Activated T-helper 2 cell treated with anti-CD3 and anti-CD28 coated beads, Interferon-gamma antibody, Interleukin-2, Interleukin-4, amounts not matched to agents 10 μg/mL and 5 μg/mL and 100 μg/mL, durations not matched to agents 14 hours and 24 hours and 36 hours (primary cell): ENCODE measurements at regions of chr10 and their contacts with region 1.

Region 1: GRCh38 chr10:110803830-110804338 is 67.8 kb upstream of the PDCD4 start:
- DNase-seq: no peak
- H3K4me3 Mint-ChIP-seq: no peak overlapping the region
- H3K27ac Mint-ChIP-seq: peak overlapping the region; percentile 39
- H3K4me1 Mint-ChIP-seq: peaks cover 34% of the 10 kb centered on the region
- H3K27me3 Mint-ChIP-seq: no peaks in the 10 kb centered on the region

Region 2: DNA sequence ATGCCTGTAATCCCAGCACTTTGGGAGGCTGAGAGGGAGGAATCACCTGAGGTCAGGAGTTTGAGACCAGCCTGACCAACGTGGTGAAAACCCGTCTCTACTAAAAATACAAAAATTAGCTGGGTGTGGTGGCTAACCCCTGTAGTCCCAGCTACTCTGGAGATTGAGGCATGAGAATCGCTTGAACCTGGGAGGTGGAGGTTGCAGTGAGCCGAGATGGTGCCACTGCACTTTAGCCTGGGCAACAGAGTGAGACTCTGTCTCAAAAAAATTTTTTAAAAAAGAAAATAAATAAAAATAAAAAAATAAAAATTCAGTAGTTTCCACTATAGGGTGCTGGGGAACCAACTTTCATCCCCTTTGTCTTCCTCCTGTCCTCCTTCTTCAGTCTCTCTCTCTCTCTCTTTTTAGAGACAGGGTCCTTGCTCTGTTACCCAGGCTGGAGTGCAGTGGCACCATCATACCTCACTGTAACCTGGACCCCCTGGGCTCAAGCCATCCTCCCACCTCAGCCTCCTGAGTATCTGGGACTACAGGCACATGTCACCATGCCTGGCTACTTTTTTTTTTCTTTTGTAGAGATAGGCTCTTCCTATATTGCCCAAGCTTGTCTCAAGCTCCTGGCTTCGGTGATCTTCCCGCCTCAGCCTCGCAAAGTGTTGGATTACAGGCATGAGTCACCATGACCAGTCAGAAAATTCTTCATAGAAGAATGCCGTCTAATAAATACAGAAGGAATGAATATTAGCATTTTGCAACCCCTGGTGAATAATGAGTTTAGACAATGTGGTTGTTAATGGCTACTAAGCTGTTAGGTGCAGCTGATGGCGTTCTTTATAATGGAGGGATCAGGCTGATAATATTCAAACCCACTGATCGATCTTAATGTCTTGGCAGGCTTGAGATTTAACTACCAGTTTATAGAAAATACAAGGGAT is 139.1 kb before region 1 on chr10:
- intact Hi-C with region 1: no loop called
- DNase-seq: no peak
- H3K4me3 Mint-ChIP-seq: no peak overlapping the region
- H3K27ac Mint-ChIP-seq: no peak overlapping the region
- H3K4me1 Mint-ChIP-seq: peaks cover 9% of the 10 kb centered on the region
- H3K27me3 Mint-ChIP-seq: peaks cover 57% of the 10 kb centered on the region

Region 3: GRCh38 chr10:110746254-110746826 is 57.5 kb before region 1 on chr10:
- intact Hi-C with region 1: loop called (anchors 2 kb)
- DNase-seq: peak; percentile 27
- H3K4me3 Mint-ChIP-seq: no peak overlapping the region
- H3K27ac Mint-ChIP-seq: no peak overlapping the region
- H3K4me1 Mint-ChIP-seq: peaks cover 43% of the 10 kb centered on the region
- H3K27me3 Mint-ChIP-seq: no peaks in the 10 kb centered on the region

Region 4: GRCh38 chr10:110843031-110843430 is 39.1 kb after region 1 on chr10:
- intact Hi-C with region 1: loop called (anchors 5 kb)
- DNase-seq: peak; percentile 56
- H3K4me3 Mint-ChIP-seq: no peak overlapping the region
- H3K27ac Mint-ChIP-seq: peak overlapping the region; percentile 71
- H3K4me1 Mint-ChIP-seq: peaks cover 30% of the 10 kb centered on the region
- H3K27me3 Mint-ChIP-seq: no peaks in the 10 kb centered on the region

Region 5: DNA sequence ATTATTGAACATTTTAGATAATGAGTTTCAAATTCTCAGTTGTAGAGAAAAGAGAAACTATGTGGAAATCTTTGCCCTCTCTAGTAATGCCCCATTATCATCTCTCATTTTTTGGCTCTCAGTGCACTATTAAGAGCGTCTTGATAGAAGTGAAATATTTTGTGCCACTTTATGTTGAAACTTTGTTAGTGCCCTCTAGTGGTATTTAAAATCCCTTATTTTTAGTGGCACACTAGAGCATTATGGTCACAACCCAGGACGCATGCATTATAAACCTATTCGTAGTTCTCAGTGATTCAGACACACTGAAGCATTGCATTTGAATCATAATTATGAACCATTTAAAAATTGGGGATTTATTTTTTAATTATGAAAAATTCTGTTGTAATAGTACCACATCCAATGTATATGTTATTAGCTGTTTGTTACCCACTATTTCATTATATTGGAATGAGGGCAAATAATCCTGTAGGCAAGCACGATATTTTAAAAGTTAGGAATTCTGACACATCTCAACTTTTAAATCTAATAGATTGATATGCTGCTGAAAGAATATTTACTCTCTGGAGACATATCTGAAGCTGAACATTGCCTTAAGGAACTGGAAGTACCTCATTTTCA is 89.8 kb after region 1 on chr10:
- intact Hi-C with region 1: loop called (anchors 5 kb)
- DNase-seq: no peak
- H3K4me3 Mint-ChIP-seq: no peak overlapping the region
- H3K27ac Mint-ChIP-seq: no peak overlapping the region
- H3K4me1 Mint-ChIP-seq: peaks cover 6% of the 10 kb centered on the region
- H3K27me3 Mint-ChIP-seq: no peaks in the 10 kb centered on the region

Region 6: GRCh38 chr10:110936757-110937156 is 132.9 kb after region 1 on chr10:
- intact Hi-C with region 1: no loop called
- DNase-seq: no peak
- H3K4me3 Mint-ChIP-seq: no peak overlapping the region
- H3K27ac Mint-ChIP-seq: no peak overlapping the region
- H3K4me1 Mint-ChIP-seq: peaks cover 7% of the 10 kb centered on the region
- H3K27me3 Mint-ChIP-seq: no peaks in the 10 kb centered on the region